Activated CD4-positive, alpha-beta memory T cell treated with anti-CD3 and anti-CD28 coated beads, Interleukin-2, amount 10 ng/mL, durations not matched to agents 7 days and 5 days (primary cell): ENCODE measurements at regions of chr6 and their contacts with region 1.

Region 1: GRCh38 chr6:142946181-142946923 is 1.4 kb upstream of the HIVEP2 start:
- DNase-seq: peak; percentile 87
- H3K4me3 Mint-ChIP-seq: peak overlapping the region; percentile 99
- H3K27ac Mint-ChIP-seq: peak overlapping the region; percentile 89
- H3K4me1 Mint-ChIP-seq: peaks cover 36% of the 10 kb centered on the region
- H3K27me3 Mint-ChIP-seq: no peaks in the 10 kb centered on the region

Region 2: DNA sequence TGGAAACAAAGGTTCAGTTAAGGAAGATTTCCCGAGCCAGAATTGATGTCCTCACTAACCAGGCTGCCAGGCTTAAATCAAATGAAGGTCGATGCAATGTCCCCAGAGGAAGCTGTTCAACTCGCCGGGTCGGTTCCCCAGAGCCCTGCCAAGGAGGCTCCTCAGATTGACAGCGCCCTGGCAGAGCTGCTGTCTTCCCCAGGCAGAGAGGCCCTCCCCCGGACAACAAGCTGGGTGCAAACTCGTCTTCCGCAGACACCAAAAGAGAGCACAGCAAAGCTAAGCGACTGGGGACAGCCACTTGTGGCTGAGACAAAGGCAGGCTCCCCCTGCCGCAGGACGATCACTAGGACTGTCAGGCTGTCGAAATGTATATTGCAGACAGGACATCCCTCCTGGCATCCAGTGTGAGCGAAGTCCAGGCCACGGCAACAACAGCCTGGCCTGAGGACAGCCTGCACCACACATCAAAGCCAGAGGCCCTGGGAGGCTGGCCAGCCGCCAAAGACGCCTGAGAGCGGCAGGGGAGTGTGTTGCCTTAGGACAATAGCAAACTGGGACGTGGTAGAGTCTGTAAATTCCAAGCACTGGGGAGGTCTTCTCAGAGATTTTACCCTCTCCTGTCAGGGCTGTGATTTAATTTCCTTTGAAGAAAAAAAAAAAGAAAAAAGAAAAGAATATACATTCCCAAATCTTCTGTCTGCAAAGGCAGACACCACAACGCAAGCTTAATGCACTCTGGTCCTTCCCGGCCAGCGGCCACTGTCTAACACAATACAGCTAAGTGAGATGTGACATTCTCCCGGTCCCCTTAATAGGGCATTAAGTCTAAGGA is 100.5 kb before region 1 on chr6:
- CTCF ChIA-PET with region 1: interaction called, 6 read pairs
- POLR2A ChIA-PET with region 1: interaction called, 25 read pairs
- DNase-seq: peak; percentile 72
- H3K4me3 Mint-ChIP-seq: peak overlapping the region; percentile 79
- H3K27ac Mint-ChIP-seq: peak overlapping the region; percentile 91
- H3K4me1 Mint-ChIP-seq: peaks cover 90% of the 10 kb centered on the region
- H3K27me3 Mint-ChIP-seq: no peaks in the 10 kb centered on the region

Region 3: GRCh38 chr6:142857233-142857761 is 89.1 kb before region 1 on chr6:
- CTCF ChIA-PET with region 1: interaction called, 4 read pairs
- POLR2A ChIA-PET with region 1: interaction called, 15 read pairs
- DNase-seq: no peak
- H3K4me3 Mint-ChIP-seq: peak overlapping the region; percentile 69
- H3K27ac Mint-ChIP-seq: peak overlapping the region; percentile 98
- H3K4me1 Mint-ChIP-seq: peaks cover 82% of the 10 kb centered on the region
- H3K27me3 Mint-ChIP-seq: no peaks in the 10 kb centered on the region

Region 4: DNA sequence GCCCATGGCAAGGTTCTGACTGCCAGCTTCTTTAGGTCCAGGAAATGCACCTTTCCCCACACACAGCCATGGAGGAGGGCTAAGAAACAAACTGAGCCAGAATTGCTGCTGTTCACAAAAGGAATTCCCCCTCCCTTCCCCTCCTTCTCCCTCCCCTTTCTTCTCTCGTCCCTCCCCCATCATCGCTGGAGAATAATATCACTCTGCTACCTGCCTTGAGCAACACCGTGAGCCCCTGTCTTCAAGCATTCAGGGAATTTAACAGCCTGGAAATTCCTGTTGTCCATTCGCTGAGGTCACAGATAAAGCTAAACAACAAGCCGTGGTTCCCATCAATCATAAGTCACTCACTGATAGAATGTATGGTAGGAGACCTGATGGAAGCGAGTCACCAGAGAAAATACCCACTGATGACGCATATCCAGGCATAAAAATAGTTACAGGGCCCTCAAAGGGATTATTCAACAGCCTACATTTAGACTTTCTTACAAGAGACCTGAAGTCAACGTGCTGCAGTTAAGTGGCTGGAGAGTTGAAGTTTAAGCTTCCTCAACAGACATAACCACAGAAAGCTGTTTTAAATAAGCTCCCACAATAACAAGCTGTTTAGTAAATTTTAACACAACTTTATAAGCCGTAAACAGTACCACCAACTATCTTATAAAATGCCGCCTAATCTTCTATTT is 61.0 kb before region 1 on chr6:
- CTCF ChIA-PET with region 1: interaction called, 8 read pairs
- POLR2A ChIA-PET with region 1: interaction called, 75 read pairs
- DNase-seq: peak; percentile 35
- H3K4me3 Mint-ChIP-seq: peak overlapping the region; percentile 84
- H3K27ac Mint-ChIP-seq: peak overlapping the region; percentile 93
- H3K4me1 Mint-ChIP-seq: peaks cover 71% of the 10 kb centered on the region
- H3K27me3 Mint-ChIP-seq: no peaks in the 10 kb centered on the region

Region 5: DNA sequence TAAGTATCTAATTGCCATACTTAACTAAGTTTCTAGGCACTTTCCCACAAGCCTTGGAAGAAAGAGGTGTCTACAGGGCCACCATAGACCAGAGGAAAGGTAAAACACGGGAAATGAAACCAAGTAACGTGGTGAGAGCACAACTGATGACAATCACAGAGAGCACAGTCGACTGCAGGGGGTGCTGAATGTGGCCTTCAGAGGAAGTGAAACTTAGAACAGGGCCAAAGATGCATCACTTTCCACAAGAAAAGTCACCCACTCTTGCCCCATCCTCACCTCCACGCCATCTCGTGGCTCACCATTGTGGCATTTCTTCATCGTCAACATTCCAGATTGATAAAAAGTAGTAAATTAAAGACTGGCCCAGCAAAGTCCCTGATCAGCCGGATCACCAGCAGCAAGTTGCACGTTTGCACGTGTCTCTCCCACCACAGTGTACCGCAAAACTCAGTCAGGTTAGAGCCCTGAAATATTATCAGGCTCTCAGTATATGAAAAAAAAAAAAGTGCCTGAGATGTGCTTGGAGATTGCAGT is 32.8 kb before region 1 on chr6:
- CTCF ChIA-PET with region 1: interaction called, 4 read pairs
- POLR2A ChIA-PET with region 1: interaction called, 21 read pairs
- DNase-seq: peak; percentile 81
- H3K4me3 Mint-ChIP-seq: peak overlapping the region; percentile 75
- H3K27ac Mint-ChIP-seq: peak overlapping the region; percentile 99
- H3K4me1 Mint-ChIP-seq: peaks cover 67% of the 10 kb centered on the region
- H3K27me3 Mint-ChIP-seq: no peaks in the 10 kb centered on the region

Region 6: DNA sequence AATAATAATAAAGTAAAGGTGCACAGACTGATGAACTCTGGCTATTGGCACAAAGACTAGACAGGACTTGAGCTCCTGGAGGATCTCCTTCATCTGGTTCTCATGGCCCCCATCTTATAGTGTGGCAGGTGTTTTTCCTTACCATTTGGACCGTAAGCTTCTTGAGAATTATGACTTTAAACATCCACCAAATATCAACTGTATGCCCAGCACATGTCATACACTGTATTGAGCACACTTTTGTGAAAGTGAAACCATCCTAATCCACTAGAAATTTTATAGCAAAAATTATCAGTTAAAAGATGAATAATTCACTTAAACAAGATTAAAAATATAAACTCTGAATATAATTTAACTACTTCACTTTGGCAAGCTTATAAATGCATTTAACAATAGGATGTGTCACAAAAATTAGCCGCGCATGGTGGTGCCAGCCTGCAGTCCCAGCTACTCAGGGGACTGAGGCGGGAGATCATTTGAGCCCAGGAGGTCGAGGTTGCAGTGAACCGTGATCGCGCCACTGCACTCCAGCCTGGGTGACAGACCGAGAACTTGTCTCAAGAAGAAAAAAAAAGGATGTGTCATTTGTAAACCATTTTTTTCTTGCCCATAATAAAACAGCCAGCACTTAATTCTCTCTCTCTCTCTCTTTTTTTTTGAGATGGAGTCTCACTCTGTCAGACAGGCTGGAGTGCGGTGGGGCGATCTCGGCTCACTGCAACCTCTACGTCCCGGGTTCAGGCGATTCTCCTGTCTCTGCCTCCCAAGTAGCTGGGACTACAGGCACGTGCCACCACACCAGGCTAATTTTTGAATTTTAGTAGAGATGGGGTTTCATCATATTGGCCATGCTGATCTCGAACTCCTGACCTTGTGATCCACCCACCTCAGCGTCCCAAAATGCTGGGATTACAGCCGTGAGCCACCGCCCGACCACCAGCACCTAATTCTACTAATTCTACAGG is 10.5 kb before region 1 on chr6:
- CTCF ChIA-PET with region 1: interaction called, 9 read pairs
- POLR2A ChIA-PET with region 1: interaction called, 168 read pairs
- DNase-seq: peak; percentile 40
- H3K4me3 Mint-ChIP-seq: peak overlapping the region; percentile 80
- H3K27ac Mint-ChIP-seq: peak overlapping the region; percentile 87
- H3K4me1 Mint-ChIP-seq: peaks cover 81% of the 10 kb centered on the region
- H3K27me3 Mint-ChIP-seq: no peaks in the 10 kb centered on the region